RWPE1 (cell line): ENCODE measurements at regions of chr3 and their contacts with region 1.

Region 1: DNA sequence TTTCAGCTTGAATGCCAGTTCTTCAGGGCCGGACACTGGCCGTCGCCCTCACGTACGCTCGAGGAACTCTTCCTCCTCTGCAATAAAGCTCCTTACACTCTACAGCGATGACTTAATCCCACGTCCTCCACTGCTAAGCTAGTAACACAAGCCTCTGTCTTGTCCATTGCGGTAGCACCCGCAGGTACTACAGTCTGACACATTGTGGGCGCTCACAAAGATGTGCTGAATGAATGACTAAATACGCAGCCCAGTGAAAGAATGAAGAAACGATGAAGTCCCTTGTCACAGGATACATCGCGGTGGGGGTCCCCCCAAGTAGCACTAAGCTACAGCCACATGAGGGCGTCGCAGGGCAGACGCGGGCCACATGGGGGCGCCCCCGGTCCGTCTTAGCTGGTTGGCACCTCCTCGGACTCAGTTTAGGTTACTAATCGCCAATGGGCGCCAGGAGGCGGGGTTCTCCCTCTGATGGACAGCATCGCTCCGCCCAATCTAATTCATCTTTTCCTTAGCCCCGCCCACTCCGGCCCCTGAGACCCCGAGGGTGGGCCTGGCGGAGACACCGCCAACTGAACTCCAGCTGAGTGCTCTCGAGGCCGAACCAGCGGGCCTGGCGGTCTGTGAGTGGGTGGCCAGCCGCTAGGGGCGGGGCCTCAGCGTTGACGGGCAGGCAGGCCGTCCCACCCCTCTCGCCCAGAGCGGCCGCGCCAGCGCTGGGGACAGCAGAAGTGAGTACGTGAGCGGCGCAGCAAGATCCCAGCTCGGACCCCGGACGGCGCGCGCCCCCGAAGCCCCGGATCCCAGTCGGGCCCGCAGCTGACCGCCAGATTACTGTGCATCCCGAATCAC is at the start of gene EPHB3:
- DNase-seq: peak; percentile 99
- H3K27ac ChIP-seq: peak within 1 kb of the TSS; percentile 97
- CTCF ChIP-seq: peak; percentile 97

Region 2: GRCh38 chr3:184718431-184718830 is 157.1 kb after region 1 on chr3:
- CTCF ChIA-PET with region 1: no interaction called
- POLR2A ChIA-PET with region 1: interaction called, 13 read pairs
- DNase-seq: no peak
- H3K27ac ChIP-seq: no peak overlapping the region
- CTCF ChIP-seq: no peak

Region 3: DNA sequence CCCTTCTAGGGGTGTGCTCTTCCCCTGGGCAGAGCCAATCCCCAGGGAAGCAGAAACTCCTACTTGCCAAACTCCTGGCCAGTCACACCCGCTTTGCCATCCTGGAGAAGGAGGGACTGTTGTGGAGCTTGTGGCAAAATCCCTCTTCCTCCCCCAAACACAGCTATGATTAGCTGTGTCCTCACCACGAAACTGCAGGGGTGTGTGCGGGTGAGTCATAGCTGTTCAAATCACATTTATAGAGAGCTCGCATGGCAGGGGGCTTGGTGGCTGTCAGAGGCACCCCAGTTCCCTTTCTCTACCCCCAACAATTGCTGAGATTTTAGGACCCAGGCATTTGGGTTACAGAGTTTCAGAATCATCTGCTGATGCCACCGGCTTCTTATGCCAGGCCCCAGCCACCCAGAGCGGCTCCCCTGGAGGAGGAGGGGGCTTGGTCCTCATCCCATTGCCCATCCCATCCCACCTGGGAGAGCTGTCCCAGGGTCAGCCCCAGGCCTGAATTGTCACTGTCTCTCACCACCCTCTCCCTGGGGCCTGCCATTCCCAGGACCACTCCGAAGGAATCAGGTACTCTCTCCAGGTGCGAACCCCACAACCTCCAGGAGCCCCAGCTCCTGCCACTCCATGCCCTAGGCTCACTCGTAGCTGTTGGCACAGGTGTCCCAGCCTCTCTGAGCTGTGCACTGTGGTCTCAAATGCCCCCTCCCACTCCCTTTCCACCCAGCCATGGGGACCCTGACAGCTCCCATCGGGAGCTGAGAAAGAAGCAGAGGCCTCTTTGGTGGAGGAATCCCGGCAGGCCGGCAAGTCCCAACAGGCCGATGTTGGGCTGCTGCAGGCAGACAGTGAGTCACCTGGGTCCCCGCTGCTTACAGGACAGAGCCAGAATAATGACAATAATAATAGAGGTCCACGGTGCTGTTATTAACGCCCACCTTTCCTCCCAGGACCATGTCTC is 179.5 kb after region 1 on chr3:
- CTCF ChIA-PET with region 1: interaction called, 17 read pairs
- POLR2A ChIA-PET with region 1: interaction called, 5 read pairs
- DNase-seq: peak; percentile 89
- H3K27ac ChIP-seq: peak overlapping the region; percentile 93
- CTCF ChIP-seq: no peak

Region 4: DNA sequence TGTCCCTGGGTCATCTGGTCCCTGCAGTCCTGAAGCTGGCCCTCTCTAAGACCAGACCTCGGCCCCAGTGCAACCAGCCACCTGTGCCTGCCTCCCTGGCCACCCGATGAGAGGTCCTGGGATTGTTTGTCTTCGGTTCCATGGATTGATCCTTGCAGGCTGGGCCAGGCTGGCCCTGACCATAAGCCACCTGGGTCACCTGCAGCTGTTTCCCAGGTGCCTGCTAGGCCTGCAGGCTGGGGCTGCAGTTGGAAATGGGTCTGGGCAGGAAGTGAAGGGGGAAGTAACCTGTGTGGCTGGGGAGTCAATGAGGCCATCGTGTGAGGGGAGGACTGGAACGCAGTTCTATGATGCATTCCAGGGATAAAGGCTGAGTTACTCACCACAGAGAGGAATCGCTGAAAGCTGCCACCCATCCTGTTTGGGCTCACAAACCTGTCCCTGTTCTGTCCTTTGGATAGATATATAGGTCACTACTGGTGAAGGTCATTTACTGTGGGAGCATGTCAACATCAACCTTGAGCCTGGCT is 219.8 kb after region 1 on chr3:
- CTCF ChIA-PET with region 1: interaction called, 24 read pairs
- POLR2A ChIA-PET with region 1: interaction called, 4 read pairs
- DNase-seq: no peak
- H3K27ac ChIP-seq: no peak overlapping the region
- CTCF ChIP-seq: no peak

Region 5: DNA sequence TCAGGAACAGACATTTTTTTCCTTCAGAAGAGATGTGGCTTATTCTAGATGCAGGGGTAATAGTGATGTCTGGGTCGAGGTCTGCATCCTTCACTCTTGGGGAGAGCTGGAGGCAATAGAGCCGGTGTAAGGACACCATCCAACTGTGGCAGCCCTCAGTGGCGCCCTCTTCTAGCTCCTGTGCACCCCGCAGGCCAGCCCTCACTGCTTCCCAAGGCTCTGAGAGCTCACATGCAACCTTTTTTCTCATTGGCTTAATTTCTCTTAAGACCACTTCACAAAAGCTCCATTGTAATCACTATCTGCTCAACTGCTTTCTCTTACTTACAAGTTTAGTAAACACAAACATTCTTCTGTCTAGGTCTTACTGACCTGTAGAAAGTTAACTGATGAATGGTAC is 246.7 kb after region 1 on chr3:
- CTCF ChIA-PET with region 1: interaction called, 11 read pairs
- POLR2A ChIA-PET with region 1: interaction called, 4 read pairs
- DNase-seq: no peak
- H3K27ac ChIP-seq: no peak overlapping the region
- CTCF ChIP-seq: no peak

Region 6: GRCh38 chr3:184981071-184981470 is 419.8 kb after region 1 on chr3:
- CTCF ChIA-PET with region 1: no interaction called
- POLR2A ChIA-PET with region 1: no interaction called
- DNase-seq: no peak
- H3K27ac ChIP-seq: no peak overlapping the region
- CTCF ChIP-seq: no peak